Left ventricle myocardium inferior (tissue), 1 donor: ENCODE measurements at regions of chr5 and their contacts with region 1.

Region 1: DNA sequence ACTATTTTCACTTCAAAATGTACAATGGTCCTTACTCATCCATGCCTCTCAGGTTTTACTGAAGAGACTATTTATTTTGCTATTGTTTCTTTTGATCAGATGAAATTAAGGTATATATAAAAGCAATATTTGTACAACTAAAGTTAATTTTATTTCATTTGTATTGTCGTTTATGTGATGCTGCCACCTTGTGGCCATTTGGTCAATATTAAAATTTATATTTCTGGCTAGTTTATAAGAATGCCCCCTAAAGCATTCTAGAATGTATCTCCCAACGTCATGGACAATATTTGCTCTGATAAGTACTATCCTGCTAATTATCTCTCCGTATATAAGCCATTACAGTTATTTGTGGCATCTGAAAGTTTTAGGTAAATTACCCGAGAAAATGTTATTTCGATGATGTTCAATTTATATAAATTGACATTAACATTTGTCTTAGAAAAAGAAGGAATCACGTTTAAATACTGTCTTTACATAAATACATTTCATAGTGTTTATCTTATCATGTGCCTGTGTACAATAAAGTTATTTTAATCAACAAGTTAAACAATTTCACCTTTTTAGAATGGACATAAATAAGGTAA is 680.0 kb downstream of the TAF11L14 start:
- DNase-seq: no peak
- H3K4me3 ChIP-seq: no peak overlapping the region
- H3K27ac ChIP-seq: no peak overlapping the region
- H3K4me1 ChIP-seq: no peaks in the 10 kb centered on the region
- H3K27me3 ChIP-seq: peaks cover 9% of the 10 kb centered on the region
- CTCF ChIP-seq: peak; percentile 56

Region 2: GRCh38 chr5:17216176-17216973 is 1097.9 kb before region 1 on chr5:
- intact Hi-C with region 1: loop called (anchors 5 kb)
- DNase-seq: peak; percentile 59
- H3K4me3 ChIP-seq: peak overlapping the region; percentile 66
- H3K27ac ChIP-seq: no peak overlapping the region
- H3K4me1 ChIP-seq: peaks cover 25% of the 10 kb centered on the region
- H3K27me3 ChIP-seq: peaks cover 93% of the 10 kb centered on the region
- CTCF ChIP-seq: peak; percentile 79